Activated CD4-positive, alpha-beta T cell treated with anti-CD3 and anti-CD28 coated beads, Interleukin-2, amount 10 ng/mL, durations not matched to agents 24 days and 14 days (primary cell): ENCODE measurements at regions of chr2 and their contacts with region 1.

Region 1: GRCh38 chr2:189142893-189143759 is 36.4 kb downstream of the COL5A2 start:
- DNase-seq: peak; percentile 83
- H3K4me3 Mint-ChIP-seq: no peak overlapping the region
- H3K27ac Mint-ChIP-seq: no peak overlapping the region
- H3K4me1 Mint-ChIP-seq: no peaks in the 10 kb centered on the region
- H3K27me3 Mint-ChIP-seq: no peaks in the 10 kb centered on the region

Region 2: GRCh38 chr2:189217541-189217940 is 74.4 kb after region 1 on chr2:
- intact Hi-C with region 1: no loop called
- DNase-seq: no peak
- H3K4me3 Mint-ChIP-seq: no peak overlapping the region
- H3K27ac Mint-ChIP-seq: no peak overlapping the region
- H3K4me1 Mint-ChIP-seq: no peaks in the 10 kb centered on the region
- H3K27me3 Mint-ChIP-seq: no peaks in the 10 kb centered on the region

Region 3: GRCh38 chr2:189347540-189347939 is 204.4 kb after region 1 on chr2:
- intact Hi-C with region 1: loop called (anchors 1 kb)
- DNase-seq: peak; percentile 67
- H3K4me3 Mint-ChIP-seq: no peak overlapping the region
- H3K27ac Mint-ChIP-seq: no peak overlapping the region
- H3K4me1 Mint-ChIP-seq: peaks cover 4% of the 10 kb centered on the region
- H3K27me3 Mint-ChIP-seq: no peaks in the 10 kb centered on the region

Region 4: GRCh38 chr2:189412330-189412953 is 269.3 kb after region 1 on chr2:
- intact Hi-C with region 1: loop called (anchors 1 kb)
- DNase-seq: peak; percentile 84
- H3K4me3 Mint-ChIP-seq: no peak overlapping the region
- H3K27ac Mint-ChIP-seq: no peak overlapping the region
- H3K4me1 Mint-ChIP-seq: peaks cover 6% of the 10 kb centered on the region
- H3K27me3 Mint-ChIP-seq: no peaks in the 10 kb centered on the region